ENCODE measurements at regions of chr12 and their contacts with region 1.

Region 1: GRCh38 chr12:99670635-99671034 is 23.1 kb downstream of the GARIN6 start:
- DNase-seq: no peak
- H3K4me3 ChIP-seq: no peak overlapping the region
- H3K27ac ChIP-seq: no peak overlapping the region
- H3K4me1 ChIP-seq: no peaks in the 10 kb centered on the region
- H3K27me3 ChIP-seq: no peaks in the 10 kb centered on the region
- CTCF ChIP-seq: no peak
- POLR2A ChIP-seq: no peak

Region 2: DNA sequence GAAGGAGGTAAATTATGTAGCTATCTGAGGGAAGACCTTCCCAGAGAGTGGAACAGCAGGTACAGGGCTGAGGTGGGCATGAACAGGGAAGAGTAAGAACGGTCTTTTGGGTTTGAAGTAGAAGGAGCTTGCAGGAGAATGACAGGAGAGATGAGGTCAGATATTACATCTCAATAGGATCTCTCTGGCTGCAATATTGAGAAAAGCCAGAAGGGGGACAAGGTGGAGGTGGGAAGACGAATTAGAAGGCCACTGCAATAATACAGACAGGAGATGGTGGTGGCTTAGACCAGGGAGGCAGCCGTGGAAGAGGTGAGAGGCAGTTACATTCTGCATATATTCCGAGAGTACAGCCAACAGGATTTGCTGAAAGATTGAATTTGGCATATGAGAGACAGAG is 715.4 kb before region 1 on chr12:
- CTCF ChIA-PET with region 1: no interaction called
- POLR2A ChIA-PET with region 1: no interaction called
- dilution Hi-C with region 1: no loop called
- intact Hi-C with region 1: loop called (anchors 5 kb)
- DNase-seq: peak; percentile 21
- H3K4me3 ChIP-seq: no peak overlapping the region
- H3K27ac ChIP-seq: no peak overlapping the region
- H3K4me1 ChIP-seq: no peaks in the 10 kb centered on the region
- H3K27me3 ChIP-seq: no peaks in the 10 kb centered on the region
- CTCF ChIP-seq: peak; percentile 16 to 33
- POLR2A ChIP-seq: no peak

Region 3: DNA sequence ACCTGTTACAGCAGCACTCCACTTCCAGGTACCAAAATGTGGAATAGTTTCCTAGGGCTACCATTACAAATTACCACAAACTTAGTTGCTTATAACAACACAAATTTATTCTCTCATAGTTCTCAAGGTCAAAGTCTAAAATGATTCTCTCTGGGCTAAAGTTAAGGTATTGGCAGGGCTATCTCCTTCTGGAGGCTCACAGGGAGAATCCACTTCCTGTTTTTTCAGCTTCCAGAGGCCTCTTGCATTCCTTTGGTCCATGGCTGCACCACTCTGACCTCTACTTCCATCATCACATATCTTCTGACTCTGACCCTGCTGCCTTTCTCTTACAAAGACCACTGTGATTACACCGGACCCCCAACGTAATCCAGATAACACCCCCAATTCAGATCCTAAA is 26.0 kb before region 1 on chr12:
- CTCF ChIA-PET with region 1: no interaction called
- POLR2A ChIA-PET with region 1: no interaction called
- dilution Hi-C with region 1: no loop called
- intact Hi-C with region 1: no loop called
- DNase-seq: no peak
- H3K4me3 ChIP-seq: no peak overlapping the region
- H3K27ac ChIP-seq: no peak overlapping the region
- H3K4me1 ChIP-seq: no peaks in the 10 kb centered on the region
- H3K27me3 ChIP-seq: no peaks in the 10 kb centered on the region
- CTCF ChIP-seq: no peak
- POLR2A ChIP-seq: no peak